Prostate gland (tissue), 2 donors: ENCODE measurements at regions of chr1 and their contacts with region 1.

Region 1: GRCh38 chr1:15598436-15598835 is 13.6 kb upstream of the AGMAT start:
- DNase-seq: no peak
- H3K4me3 ChIP-seq: no peak overlapping the region
- H3K27ac ChIP-seq: no peak overlapping the region
- H3K4me1 ChIP-seq: no peaks in the 10 kb centered on the region
- H3K27me3 ChIP-seq: no peaks in the 10 kb centered on the region
- CTCF ChIP-seq: no peak
- POLR2A ChIP-seq: no peak

Region 2: DNA sequence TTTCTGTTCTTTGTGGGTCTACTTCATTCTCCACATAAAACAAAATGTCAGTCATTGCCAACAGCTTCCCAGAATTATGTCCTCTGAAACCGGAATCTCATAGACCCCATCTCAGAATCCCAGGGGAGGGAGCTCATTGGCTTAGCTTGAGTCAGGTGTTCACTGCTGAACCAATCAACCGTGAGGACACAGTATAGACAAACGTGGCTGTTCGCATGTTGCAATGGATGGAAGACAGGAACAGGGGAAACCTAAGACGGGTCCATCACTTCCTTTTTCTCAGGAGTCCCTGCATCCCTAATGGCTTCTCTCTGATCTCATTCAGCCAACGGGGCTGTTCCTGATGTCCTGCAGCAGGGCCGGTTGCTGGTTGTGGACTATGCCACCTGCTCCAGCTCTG is 132.8 kb before region 1 on chr1:
- intact Hi-C with region 1: no loop called
- DNase-seq: no peak
- H3K4me3 ChIP-seq: no peak overlapping the region
- H3K27ac ChIP-seq: no peak overlapping the region
- H3K4me1 ChIP-seq: no peaks in the 10 kb centered on the region
- H3K27me3 ChIP-seq: no peaks in the 10 kb centered on the region
- CTCF ChIP-seq: no peak
- POLR2A ChIP-seq: no peak

Region 3: DNA sequence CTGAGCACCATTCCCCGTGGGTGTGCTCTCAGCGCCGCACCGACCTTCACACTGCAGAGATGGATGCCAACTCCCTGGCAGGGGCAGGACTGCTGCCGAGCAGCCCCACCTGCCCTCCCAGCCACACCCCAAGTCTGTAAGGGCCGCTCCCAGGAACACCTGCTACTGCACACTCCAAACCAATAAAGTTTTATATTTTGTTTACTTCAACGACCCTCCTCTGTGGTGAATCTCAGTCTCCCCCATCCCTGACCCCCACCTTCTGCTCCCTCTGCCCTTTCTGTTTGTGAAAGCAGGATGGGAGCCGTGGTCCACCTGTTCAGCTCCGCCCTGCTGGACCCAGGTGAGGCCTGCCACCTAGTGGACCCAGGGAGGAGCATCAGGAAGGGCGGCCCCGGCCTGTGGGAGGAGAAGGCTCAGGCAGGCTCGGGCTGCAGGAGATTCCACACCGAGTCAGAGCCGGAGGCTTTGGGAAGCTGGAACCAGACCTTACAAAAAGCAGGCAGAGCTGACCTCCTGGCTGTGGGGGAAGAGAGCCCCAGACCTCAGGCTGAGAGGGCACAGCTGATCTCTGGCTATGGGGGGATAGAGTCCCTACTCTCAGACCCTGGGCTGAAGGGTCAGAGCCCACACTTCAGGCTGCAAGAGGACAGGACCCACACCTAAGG is 142.9 kb after region 1 on chr1:
- intact Hi-C with region 1: loop called (anchors 5 kb)
- DNase-seq: peak; percentile 80
- H3K4me3 ChIP-seq: no peak overlapping the region
- H3K27ac ChIP-seq: no peak overlapping the region
- H3K4me1 ChIP-seq: no peaks in the 10 kb centered on the region
- H3K27me3 ChIP-seq: no peaks in the 10 kb centered on the region
- CTCF ChIP-seq: peak; percentile 37 to 95 (median 83)
- POLR2A ChIP-seq: no peak